AG04449 (cell line): ENCODE measurements at regions of chr4 and their contacts with region 1.

Region 1: GRCh38 chr4:85798012-85798770 is 323.2 kb downstream of the ARHGAP24 start:
- DNase-seq: no peak
- H3K4me3 ChIP-seq: no peak overlapping the region
- CTCF ChIP-seq: no peak

Region 2: GRCh38 chr4:85756938-85757337 is 41.3 kb before region 1 on chr4:
- CTCF ChIA-PET with region 1: interaction called, 15 read pairs
- POLR2A ChIA-PET with region 1: no interaction called
- DNase-seq: no peak
- H3K4me3 ChIP-seq: no peak overlapping the region
- CTCF ChIP-seq: peak; percentile 51

Region 3: DNA sequence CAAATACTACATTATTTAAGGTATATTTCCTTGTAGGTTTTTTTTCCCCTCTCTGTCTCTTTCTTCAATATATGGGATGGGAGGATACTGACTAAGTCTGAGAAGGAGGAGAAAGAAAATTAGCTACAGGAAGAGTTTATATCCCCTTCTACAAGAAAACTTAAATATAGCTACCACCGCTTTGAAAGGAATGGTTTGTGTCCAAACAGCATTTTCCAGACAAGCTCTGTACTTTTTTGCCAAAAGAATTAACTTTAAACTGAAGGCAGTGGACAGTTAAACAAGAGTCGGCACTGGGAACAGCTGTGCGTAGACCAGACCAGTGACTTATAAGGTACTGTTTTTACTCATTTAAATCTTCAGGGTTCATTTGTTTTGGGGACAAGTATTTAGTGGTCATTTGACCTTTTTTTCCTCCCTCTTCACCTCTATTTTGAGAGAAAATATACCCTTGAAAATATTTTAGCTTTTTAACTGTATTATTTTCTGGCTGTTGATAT is 19.5 kb before region 1 on chr4:
- CTCF ChIA-PET with region 1: interaction called, 37 read pairs
- POLR2A ChIA-PET with region 1: no interaction called
- DNase-seq: no peak
- H3K4me3 ChIP-seq: peak overlapping the region; percentile 45
- CTCF ChIP-seq: no peak

Region 4: DNA sequence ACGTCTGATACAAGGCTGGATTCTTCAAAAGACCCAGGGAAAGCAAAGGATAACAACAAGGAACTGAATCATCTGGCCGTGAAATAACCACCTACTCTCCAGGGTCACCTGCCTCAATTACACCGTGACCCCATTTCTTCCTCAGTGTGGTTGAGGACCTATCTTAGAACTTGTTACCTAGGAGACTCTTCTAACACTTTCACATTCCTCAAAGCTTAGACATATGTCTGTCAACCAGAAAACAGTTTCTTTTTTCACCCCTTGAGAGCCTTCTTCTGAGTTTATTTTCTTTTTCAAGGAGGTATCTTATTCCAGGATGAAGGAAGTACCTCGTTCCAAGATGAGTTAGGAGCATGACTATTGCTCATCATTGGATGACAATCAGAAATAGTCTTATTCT is 14.6 kb after region 1 on chr4:
- CTCF ChIA-PET with region 1: interaction called, 52 read pairs
- POLR2A ChIA-PET with region 1: no interaction called
- DNase-seq: no peak
- H3K4me3 ChIP-seq: no peak overlapping the region
- CTCF ChIP-seq: no peak

Region 5: GRCh38 chr4:85828027-85828890 is 30.1 kb after region 1 on chr4:
- CTCF ChIA-PET with region 1: interaction called, 12 read pairs
- POLR2A ChIA-PET with region 1: no interaction called
- DNase-seq: no peak
- H3K4me3 ChIP-seq: peak overlapping the region; percentile 31; the same call in 1 of the 2 replicates
- CTCF ChIP-seq: no peak

Region 6: GRCh38 chr4:85968945-85969819 is 171.0 kb after region 1 on chr4:
- CTCF ChIA-PET with region 1: interaction called, 58 read pairs
- POLR2A ChIA-PET with region 1: no interaction called
- DNase-seq: no peak
- H3K4me3 ChIP-seq: no peak overlapping the region
- CTCF ChIP-seq: peak; percentile 30